ENCODE measurements at regions of chr10 and their contacts with region 1.

Region 1: GRCh38 chr10:19819419-19820033 is 3.3 kb downstream of the PLXDC2 start:
- DNase-seq: no peak

Region 2: DNA sequence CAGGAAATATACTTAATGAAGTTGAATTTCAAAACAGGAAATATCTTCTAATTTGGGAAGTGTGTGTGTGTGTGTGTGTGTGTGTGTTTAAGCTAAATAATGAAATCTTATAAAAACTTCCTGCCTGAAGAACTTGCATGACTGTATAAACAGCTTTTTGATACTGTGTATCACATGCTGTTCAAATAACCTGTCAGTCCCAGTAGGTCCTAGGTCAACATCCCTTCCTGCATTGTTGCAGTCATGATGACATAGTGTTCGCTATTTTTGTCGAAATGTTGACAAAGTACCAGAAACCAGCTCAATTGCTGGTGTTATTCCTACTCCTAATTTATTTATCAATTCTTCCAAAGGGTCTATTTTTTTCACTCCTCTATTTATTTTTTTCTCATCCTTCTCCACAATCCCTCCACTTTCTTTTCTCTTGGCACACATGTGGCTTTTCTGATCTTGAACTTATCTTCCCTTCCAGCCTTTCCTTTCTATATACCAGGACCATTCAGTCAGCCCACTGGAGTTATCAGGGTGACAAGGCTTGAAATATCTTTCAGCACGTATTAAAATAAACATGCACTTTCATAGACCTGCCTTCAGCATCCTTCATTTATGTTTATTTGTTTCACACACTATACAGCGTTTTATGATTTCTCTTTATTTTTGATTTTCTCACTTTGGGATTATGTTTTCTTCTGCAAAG is 112.5 kb after region 1 on chr10:
- intact Hi-C with region 1: no loop called
- DNase-seq: no peak

Region 3: DNA sequence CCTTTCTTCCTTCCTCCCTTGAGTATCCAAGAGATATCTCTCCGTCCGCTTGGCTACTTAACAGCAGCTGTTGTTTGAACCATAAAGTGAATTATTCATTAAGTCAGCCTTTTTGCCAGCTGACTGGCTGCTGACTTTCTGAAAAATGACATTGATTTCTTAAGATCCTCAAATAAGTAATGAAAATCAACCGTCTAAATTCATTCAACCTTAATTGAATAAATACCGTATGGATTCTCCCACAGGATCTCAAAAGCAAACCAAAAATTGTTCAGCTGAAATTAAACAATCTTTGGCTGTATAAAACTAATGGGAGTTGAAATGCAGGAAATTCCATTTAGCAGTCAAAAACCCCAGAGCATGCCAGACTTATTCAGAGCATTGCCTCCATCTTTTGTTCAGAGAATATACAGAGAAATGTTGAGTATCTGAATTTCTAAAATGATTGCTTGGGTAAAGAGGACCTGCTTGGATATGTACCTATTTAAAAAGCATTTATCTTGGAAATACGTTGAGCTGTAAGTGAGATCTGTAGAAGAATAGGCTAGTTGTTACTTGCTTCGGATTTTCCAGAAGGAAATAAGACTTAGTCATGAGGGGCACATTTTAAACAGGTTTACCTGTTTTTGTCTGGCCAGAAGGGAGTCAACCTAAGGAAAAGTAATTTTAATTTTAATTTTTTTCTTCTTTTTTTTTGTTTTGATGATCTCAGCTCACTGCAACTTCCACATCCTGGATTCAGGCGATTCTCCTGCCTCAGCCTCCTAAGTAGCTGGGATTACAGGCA is 132.9 kb after region 1 on chr10:
- intact Hi-C with region 1: loop called (anchors 5 kb)
- DNase-seq: no peak

Region 4: GRCh38 chr10:20100171-20100570 is 280.6 kb after region 1 on chr10:
- intact Hi-C with region 1: loop called (anchors 5 kb)
- DNase-seq: no peak

Region 5: DNA sequence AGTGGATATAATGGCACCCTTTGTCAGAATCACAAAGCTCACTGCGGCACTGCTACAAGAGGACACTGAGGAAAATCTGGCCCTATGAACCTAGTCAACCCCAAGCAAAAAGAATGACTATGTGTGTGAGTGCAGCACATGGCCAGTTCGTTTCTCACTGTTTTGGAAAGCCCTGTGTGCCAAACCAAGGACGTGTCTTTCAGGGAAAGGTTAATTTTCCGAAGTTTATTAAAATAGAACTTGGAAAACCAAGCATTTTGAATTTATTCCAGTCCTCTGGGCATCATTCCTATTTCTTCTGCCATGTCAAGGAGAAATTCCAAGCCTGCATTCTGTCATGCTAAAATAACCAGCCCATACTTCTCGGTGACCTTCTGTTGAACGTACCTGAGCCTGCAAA is 468.5 kb after region 1 on chr10:
- intact Hi-C with region 1: loop called (anchors 10 kb)
- DNase-seq: peak in 4 of 10 donors; percentile 16 to 71 (median 34)

Region 6: DNA sequence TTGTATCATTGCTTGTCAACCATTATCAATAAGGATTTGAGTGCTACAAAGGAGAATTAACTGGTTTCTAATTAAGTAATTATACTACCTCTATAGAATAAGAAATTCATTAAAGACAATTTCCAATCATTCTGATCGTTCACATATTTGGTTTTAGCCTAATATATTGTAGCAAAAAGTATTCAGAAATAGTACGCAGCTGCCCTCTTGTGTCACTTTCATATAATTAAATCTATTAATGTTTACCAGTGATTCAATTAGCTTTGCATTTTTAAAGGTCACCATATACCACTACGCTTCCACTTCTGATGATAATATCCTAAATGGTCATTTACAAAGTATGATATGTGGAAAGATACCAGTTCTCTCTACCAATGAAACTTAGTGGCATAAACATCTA is 949.3 kb after region 1 on chr10:
- intact Hi-C with region 1: loop called (anchors 10 kb)
- DNase-seq: no peak